ENCODE measurements at regions of chr2 and their contacts with region 1.

Region 1: DNA sequence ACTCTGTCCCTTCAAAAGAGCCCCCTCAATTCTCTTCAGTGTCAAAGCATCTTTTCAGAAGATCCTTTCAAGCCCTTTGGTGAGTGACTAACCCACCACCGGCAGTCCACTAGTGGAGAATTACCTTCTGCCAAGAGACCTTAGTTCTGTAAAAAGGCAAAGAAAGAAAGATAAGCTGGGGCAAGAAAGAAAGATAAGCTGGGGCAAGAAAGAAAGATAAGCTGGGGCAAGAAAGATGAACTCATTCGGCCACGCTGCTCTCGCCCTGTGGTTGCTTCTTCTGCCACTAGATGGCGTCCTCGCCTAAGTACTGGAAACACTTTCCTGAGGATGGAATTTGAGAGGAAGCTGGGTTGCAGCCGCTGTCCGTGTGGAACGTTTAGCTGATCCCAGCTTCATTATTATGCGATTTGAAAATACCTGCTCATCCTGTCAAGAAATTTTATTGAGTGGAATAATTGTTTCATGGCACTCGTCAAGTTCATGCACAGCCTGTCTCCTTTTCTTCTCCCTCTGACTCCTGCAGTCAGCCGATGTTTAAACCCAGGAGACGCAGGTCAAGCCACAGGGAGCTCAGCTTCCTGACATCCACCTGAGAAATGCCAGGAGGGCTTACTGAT is 17.3 kb upstream of the ANXA4 start:
- DNase-seq: peak; percentile 90
- H3K4me3 Mint-ChIP-seq: peak overlapping the region; percentile 35
- H3K27ac Mint-ChIP-seq: no peak overlapping the region
- H3K4me1 Mint-ChIP-seq: peaks cover 7% of the 10 kb centered on the region
- H3K27me3 Mint-ChIP-seq: peaks cover 14% of the 10 kb centered on the region

Region 2: GRCh38 chr2:69755862-69756467 is 31.3 kb after region 1 on chr2:
- CTCF ChIA-PET with region 1: interaction called, 10 read pairs
- DNase-seq: no peak
- H3K4me3 Mint-ChIP-seq: no peak overlapping the region
- H3K27ac Mint-ChIP-seq: no peak overlapping the region
- H3K4me1 Mint-ChIP-seq: peaks cover 21% of the 10 kb centered on the region
- H3K27me3 Mint-ChIP-seq: no peaks in the 10 kb centered on the region

Region 3: DNA sequence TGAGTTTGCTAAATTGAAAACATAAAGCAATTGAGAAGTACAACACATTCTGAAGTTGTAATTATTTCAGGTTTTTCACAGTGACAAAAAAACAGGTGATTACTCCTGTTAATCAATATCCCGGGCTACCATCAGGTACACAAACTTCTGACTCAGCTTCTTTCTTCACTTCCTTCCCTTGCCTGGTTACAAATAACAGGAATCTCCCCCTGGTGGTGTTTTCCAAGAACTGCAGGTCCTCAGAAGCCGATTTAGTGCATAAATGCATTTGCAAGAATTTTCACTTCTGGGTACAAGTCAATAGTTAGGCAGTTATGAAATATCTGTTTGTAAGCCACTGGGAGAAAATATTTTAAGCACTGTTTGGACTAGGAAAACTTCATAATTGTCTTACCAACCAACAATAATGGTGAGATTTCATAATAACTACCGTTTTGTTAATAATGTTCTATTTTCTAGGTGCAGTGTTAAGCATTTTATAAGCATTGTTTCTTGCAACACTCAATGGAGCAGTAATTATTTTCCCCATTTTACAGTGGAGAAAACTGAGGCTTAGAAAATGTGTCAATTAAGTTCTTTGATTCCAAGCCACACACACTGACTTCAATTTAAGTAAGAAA is 92.4 kb after region 1 on chr2:
- CTCF ChIA-PET with region 1: interaction called, 230 read pairs
- DNase-seq: peak; percentile 87
- H3K4me3 Mint-ChIP-seq: no peak overlapping the region
- H3K27ac Mint-ChIP-seq: no peak overlapping the region
- H3K4me1 Mint-ChIP-seq: peaks cover 7% of the 10 kb centered on the region
- H3K27me3 Mint-ChIP-seq: no peaks in the 10 kb centered on the region

Region 4: DNA sequence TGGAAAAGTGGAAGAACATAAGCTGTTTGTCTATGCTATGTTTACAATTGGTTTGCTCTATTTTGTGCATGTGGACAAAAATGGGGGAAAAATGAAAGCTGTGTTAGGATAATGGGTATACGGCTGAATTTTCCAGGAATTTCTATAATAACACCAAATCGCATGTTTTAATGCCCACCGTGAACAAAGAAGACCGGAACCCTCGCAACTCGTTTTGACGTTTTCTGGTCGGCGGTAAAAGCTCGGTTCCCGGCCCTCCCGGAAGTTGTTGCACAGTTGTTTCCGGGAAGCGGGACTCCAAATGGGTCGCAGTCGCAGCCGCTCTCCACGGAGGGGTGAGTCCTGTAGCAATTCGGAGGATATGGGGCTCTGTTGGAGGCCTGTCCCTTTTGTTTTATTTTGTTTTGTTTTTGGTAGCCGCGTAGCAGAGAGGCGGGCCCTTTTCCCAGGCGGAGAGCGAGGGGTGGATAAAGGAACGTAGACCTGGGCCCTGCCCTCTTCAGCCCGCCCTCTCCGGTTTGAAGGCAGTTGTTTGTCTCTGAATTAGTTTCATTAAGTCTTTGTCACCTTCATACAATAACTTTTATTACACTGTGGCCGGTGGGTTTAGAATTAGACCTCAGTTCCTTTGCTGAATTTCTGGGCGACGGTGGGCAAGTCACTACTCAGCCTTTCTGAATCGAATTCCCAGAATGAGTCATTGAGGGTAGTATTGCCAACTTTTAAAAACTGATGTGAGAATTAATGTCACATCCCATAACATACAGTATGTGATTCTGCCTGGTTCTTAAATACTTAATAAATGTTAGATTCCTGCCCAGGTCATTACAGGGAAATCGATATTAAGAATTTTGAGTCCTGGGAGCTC is 169.3 kb after region 1 on chr2 and contains the start of gene SNRNP27:
- CTCF ChIA-PET with region 1: interaction called, 10 read pairs
- DNase-seq: peak; percentile 86
- H3K4me3 Mint-ChIP-seq: peak within 1 kb of the TSS; percentile 99
- H3K27ac Mint-ChIP-seq: peak within 1 kb of the TSS; percentile 96
- H3K4me1 Mint-ChIP-seq: peaks cover 45% of the 10 kb centered on the region
- H3K27me3 Mint-ChIP-seq: no peaks in the 10 kb centered on the region

Measured in activated naive CD4-positive, alpha-beta T cell treated with anti-CD3 and anti-CD28 coated beads, Interleukin-2, amount 10 ng/mL, durations not matched to agents 7 days and 5 days (primary cell).